Ascending aorta (tissue), 2 donors: ENCODE measurements at regions of chr17 and their contacts with region 1.

Region 1: DNA sequence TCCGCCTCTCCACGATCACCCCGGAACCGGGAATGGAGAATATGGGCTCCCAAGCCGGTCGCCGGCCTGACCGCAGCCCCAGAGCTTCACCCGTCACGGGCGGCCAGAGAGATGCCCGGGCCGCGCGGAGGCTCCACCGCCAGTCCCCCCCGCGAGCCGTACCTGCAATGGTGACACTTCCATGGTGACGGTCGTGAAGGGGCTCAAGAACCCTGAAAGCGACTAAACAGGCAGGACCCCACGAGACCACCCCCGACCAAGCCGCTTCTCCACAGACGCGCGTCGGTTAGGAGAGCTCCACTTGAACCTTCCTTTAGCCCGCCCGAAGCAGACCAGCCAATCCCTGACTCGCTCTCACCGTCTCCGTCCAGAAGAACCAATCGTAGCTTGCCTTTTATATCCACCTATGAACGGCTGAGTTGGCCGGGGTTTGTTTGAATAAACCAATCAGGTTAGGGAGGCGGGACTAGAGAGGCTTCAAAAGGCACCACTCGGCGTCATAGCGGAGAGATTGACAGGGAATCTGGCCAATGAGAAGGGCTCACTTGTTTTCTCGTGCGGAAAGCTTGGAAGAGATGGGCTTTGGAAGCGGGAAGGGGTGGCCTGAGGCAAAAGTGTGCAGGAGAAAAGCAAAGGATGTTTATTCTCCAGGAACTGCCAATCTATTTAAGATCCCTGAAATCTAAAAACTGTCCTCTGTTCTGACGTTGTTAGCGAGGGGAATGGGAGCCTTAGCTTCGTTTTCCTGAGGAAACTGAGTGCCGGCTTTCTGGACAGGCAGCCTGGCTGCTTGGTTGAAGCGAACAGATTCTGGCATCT is at the start of gene TOP2A:
- DNase-seq: peak; percentile 96 to 99
- H3K4me3 ChIP-seq: peak within 1 kb of the TSS; percentile 55 to 69
- H3K27ac ChIP-seq: peak within 1 kb of the TSS; percentile 42 to 46
- H3K4me1 ChIP-seq: peaks cover 0 to 9% of the 10 kb centered on the region in 2 donors
- H3K27me3 ChIP-seq: no peaks in the 10 kb centered on the region
- CTCF ChIP-seq: no peak
- total RNA-seq, gene TOP2A: 0.11 TPM

Region 2: GRCh38 chr17:40219073-40219860 is 198.6 kb before region 1 on chr17 and contains the start of gene WIPF2:
- intact Hi-C with region 1: loop called (anchors 5 kb)
- DNase-seq: peak; percentile 84 to 98
- H3K4me3 ChIP-seq: peak within 1 kb of the TSS; percentile 53 to 86
- H3K27ac ChIP-seq: peak within 1 kb of the TSS; percentile 84 to 97
- H3K4me1 ChIP-seq: peaks cover 3 to 12% of the 10 kb centered on the region in 2 donors
- H3K27me3 ChIP-seq: no peaks in the 10 kb centered on the region
- CTCF ChIP-seq: peak; percentile 61 to 79 (median 69)
- total RNA-seq, gene WIPF2: 11.2 TPM

Region 3: GRCh38 chr17:40287494-40288369 is 130.1 kb before region 1 on chr17 and contains the start of gene CDC6:
- intact Hi-C with region 1: loop called (anchors 5 kb)
- DNase-seq: peak; percentile 96 to 99
- H3K4me3 ChIP-seq: peak within 1 kb of the TSS; percentile 57 to 58
- H3K27ac ChIP-seq: peak within 1 kb of the TSS in 1 of 2 donors; percentile 27
- H3K4me1 ChIP-seq: peaks cover 0 to 8% of the 10 kb centered on the region in 2 donors
- H3K27me3 ChIP-seq: no peaks in the 10 kb centered on the region
- CTCF ChIP-seq: no peak
- total RNA-seq, gene CDC6: 1.2 TPM

Region 4: GRCh38 chr17:40317880-40318829 is 99.7 kb before region 1 on chr17:
- intact Hi-C with region 1: loop called (anchors 5 kb)
- DNase-seq: peak; percentile 91 to 99
- H3K4me3 ChIP-seq: peak overlapping the region; percentile 70 to 86
- H3K27ac ChIP-seq: peak overlapping the region; percentile 90 to 91
- H3K4me1 ChIP-seq: peaks cover 43 to 88% of the 10 kb centered on the region in 2 donors
- H3K27me3 ChIP-seq: no peaks in the 10 kb centered on the region
- CTCF ChIP-seq: no peak

Region 5: GRCh38 chr17:40443583-40444327 is 25.9 kb after region 1 on chr17:
- intact Hi-C with region 1: loop called (anchors 2 kb)
- DNase-seq: peak in 1 of 2 donors; percentile 88
- H3K4me3 ChIP-seq: peak overlapping the region; percentile 64 to 90
- H3K27ac ChIP-seq: peak overlapping the region; percentile 89 to 92
- H3K4me1 ChIP-seq: peaks cover 14 to 44% of the 10 kb centered on the region in 2 donors
- H3K27me3 ChIP-seq: no peaks in the 10 kb centered on the region
- CTCF ChIP-seq: peak in 2 of 3 experiments; percentile 25 to 43